SK-N-SH (cell line): ENCODE measurements at regions of chr2 and their contacts with region 1.

Region 1: GRCh38 chr2:97663965-97664635 is at the start of gene ACTR1B:
- DNase-seq: peak; percentile 97
- H3K4me3 ChIP-seq: peak within 1 kb of the TSS; percentile 81 to 89
- H3K27ac ChIP-seq: peak within 1 kb of the TSS; percentile 92 to 95
- H3K4me1 ChIP-seq: peaks cover 15% of the 10 kb centered on the region in 2 experiments; a peak in 3 of 4 replicates
- H3K27me3 ChIP-seq: no peaks in the 10 kb centered on the region
- CTCF ChIP-seq: peak; percentile 76
- EP300 ChIP-seq: no peak; a peak in 1 of 4 replicates
- RAD21 ChIP-seq: peak; percentile 32; the same call in 1 of the 2 replicates
- polyA plus RNA-seq, gene ACTR1B: 51.5 and 55.1 TPM in 2 replicates

Region 2: DNA sequence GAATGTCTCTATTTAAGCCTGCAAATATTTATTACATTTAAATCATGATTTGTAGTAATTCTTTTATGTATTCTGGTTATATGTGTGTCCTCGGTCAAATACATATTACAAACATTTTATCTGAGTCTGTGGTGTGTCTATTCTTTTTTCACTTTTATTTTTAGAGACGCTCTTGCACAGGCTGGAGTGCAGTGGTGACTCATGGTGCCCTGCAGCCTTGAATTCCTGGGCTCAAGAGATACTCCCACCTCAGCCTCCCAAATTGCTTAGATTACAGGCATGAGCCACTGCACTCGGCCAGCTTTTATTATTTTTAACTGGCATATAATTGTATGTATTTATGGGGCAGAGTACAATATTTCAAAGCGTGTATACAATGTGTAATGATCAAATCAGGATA is 1080.1 kb before region 1 on chr2:
- CTCF ChIA-PET with region 1: no interaction called
- POLR2A ChIA-PET with region 1: no interaction called
- DNase-seq: no peak
- H3K4me3 ChIP-seq: no peak overlapping the region
- H3K27ac ChIP-seq: no peak overlapping the region
- H3K4me1 ChIP-seq: no peaks in the 10 kb centered on the region
- H3K27me3 ChIP-seq: no peaks in the 10 kb centered on the region
- CTCF ChIP-seq: no peak
- EP300 ChIP-seq: no peak
- RAD21 ChIP-seq: no peak

Region 3: DNA sequence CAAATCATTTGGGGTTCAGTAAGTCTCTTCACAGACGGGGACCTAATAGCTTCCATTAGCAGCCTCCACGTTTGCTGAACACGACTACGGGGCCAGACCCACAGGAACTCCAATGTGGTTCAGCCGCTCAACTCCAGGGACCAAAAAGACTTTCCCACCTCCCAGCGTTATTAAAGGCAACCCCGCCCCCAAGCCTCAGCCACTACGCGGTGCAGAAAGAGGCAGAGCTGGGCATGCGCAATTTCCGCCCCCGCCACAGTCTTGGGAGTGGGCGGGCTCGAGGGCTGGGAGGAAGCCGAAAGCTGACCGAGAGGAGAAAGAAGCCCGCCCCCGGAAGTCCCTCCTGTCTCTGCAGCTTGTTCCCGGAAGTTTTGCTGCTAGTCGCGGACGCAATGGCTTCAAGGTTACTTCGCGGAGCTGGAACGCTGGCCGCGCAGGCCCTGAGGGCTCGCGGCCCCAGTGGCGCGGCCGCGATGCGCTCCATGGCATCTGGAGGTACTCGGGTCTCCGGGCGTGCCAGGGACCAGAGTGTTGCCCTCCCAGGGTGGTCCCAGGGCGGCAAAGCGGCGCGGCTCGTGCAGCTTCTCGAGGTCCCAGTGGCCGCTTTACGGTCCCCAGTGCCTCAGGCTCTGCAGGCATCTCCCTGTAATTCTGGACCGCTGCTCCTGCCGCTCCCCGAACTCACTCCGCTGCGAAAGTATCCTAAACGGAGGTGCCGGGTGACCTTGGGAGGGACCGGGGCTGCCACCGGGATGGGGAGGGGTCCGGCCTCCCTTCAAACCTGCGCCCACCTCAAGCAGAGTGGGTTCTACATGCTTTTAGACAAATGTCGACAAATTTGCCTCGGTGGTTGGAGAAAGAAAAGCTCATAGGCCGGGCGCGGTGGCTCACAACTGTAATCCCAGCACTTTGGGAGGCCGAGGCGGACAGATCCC is 18.1 kb before region 1 on chr2 and contains the start of gene COX5B:
- CTCF ChIA-PET with region 1: interaction called, 9 read pairs
- POLR2A ChIA-PET with region 1: interaction called, 26 read pairs
- DNase-seq: peak; percentile 98
- H3K4me3 ChIP-seq: peak within 1 kb of the TSS; percentile 98
- H3K27ac ChIP-seq: peak within 1 kb of the TSS; percentile 68 to 87; a peak in 3 of 4 replicates
- H3K4me1 ChIP-seq: peaks cover 0 to 16% of the 10 kb centered on the region in 2 experiments; a peak in 2 of 4 replicates
- H3K27me3 ChIP-seq: no peaks in the 10 kb centered on the region
- CTCF ChIP-seq: no peak
- EP300 ChIP-seq: no peak
- RAD21 ChIP-seq: no peak
- polyA plus RNA-seq, gene COX5B: 493 and 702 TPM in 2 replicates

Region 4: DNA sequence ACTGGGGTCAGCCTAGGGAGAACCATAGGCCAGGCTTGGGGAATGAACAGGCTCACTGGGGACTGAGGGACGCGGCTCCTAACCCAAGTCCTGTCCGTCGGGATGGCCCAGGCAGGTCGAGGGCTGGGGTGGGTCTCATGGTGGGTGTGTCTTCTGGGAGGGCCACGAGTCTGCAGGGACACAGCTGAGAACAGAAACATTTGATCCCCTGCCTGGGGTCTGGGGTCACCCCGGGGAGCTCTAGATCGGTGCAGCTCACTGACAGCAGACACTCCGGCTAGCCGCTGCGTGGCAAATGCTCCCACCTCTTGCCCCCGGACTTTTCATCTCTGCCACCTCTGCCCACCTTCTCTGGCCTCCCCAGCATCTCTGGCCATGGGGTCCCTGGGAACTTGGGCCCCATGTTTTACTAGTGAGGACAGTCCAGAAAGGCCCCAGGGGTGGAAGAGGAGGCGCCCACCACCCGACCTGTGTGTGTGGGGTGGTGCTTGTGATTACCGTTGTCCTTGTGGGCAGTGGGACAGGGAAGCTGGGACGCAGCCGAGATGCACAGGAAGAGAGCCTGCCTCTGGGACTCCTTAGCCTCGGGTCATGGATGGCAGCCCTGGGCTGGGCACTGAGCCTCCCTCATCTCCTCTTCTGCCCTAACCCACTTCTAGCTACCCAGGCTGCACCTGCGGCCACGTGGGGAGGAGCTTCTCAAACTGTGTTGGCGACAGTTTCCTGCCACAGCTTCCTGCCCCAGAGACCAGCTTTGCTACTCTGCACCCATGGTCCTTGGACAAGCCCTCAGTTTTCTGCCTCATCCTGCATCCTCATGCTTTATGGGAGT is 54.2 kb after region 1 on chr2:
- CTCF ChIA-PET with region 1: no interaction called
- POLR2A ChIA-PET with region 1: no interaction called
- DNase-seq: no peak
- H3K4me3 ChIP-seq: no peak overlapping the region
- H3K27ac ChIP-seq: no peak overlapping the region
- H3K4me1 ChIP-seq: no peaks in the 10 kb centered on the region; a peak in 1 of 4 replicates
- H3K27me3 ChIP-seq: no peaks in the 10 kb centered on the region
- CTCF ChIP-seq: no peak
- EP300 ChIP-seq: no peak
- RAD21 ChIP-seq: no peak

Region 5: GRCh38 chr2:97788986-97789644 is 125.0 kb after region 1 on chr2:
- CTCF ChIA-PET with region 1: no interaction called
- POLR2A ChIA-PET with region 1: no interaction called
- DNase-seq: no peak
- H3K4me3 ChIP-seq: no peak overlapping the region
- H3K27ac ChIP-seq: no peak overlapping the region
- H3K4me1 ChIP-seq: peaks cover 0 to 2% of the 10 kb centered on the region in 2 experiments; a peak in 1 of 4 replicates
- H3K27me3 ChIP-seq: no peaks in the 10 kb centered on the region
- CTCF ChIP-seq: no peak
- EP300 ChIP-seq: no peak
- RAD21 ChIP-seq: no peak